ENCODE measurements at regions of chr6 and their contacts with region 1.

Region 1: DNA sequence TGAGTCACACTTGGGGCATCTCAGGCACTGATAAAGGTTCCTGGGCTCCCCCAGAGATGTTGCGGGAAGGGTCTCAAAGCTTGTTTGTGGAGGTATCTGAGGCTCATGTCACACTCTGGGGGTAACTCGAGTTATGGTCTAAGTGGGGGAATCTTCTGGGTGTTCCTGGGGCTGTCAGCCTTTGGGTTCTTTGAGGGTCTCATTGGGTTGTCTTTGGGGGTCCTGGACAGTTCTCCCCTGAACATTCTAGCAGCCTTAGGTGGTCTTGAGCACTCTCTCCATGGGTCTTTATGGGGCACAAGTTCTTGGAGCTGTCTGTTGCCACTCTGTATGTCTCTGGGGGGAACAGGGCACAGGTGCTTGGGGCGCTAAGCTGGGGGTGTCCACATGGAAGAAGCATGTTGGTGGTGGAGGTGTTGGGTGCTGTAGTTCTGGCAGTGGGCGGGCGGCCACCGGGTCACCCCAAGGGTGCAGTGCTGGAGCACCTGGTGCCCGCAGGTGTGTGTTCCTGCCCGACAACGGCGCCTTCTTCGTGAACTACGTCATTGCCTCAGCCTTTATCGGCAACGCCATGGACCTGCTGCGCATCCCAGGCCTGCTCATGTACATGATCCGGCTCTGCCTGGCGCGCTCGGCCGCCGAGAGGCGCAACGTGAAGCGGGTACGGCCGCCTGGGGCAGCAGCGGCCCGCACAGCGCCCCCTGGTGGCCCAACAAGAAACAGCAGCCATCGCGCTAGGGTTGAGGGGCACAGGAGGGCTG is 7.1 kb upstream of the CAPN11 start:
- DNase-seq: peak; percentile 50 to 95 (median 74)
- ATAC-seq: peak; percentile 88
- H3K4me3 ChIP-seq: no peak overlapping the region
- H3K27ac ChIP-seq: no peak overlapping the region
- H3K4me1 ChIP-seq: peaks cover 0 to 5% of the 10 kb centered on the region in 2 donors
- H3K27me3 ChIP-seq: no peaks in the 10 kb centered on the region
- CTCF ChIP-seq: peak; percentile 99

Region 2: DNA sequence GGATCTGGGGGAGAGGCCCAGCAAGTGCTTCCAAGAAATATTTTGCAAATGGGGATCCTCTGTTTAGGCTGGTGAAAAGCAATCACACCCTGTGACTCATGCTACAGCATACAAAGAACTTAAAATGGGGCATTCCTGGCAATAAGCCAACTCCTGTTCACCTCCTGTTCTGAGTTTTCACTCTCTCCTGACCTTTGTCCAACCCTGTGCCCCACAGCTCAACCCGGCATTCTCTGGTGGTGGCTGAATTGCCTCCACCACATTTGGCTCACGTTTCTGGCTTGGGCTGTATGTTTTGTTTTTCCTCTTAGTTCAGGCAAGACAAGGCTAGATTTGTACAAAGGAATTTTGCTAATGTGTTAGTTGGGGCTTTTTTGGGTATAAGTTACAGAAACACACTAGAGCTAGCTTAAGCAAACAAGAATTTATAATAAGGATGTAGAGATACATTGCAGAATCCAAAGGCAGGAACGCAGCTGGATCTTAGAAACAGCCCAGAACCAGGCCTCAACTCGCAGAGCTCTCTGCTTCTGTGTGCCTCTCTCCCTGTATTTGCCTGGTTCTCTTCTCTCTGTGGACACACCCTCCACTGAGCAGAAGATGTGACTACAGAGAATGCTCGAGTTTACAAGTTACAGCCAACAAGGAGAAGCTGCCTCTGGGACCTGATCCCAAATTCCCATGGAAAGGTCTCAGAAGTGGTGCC is 714.8 kb before region 1 on chr6:
- intact Hi-C with region 1: no loop called
- DNase-seq: peak in 2 of 4 donors; percentile 28 to 57
- ATAC-seq: peak; percentile 75
- H3K4me3 ChIP-seq: no peak overlapping the region
- H3K27ac ChIP-seq: peak overlapping the region in 1 of 2 donors; percentile 37
- H3K4me1 ChIP-seq: peaks cover 0 to 10% of the 10 kb centered on the region in 2 donors
- H3K27me3 ChIP-seq: no peaks in the 10 kb centered on the region
- CTCF ChIP-seq: no peak

Region 3: DNA sequence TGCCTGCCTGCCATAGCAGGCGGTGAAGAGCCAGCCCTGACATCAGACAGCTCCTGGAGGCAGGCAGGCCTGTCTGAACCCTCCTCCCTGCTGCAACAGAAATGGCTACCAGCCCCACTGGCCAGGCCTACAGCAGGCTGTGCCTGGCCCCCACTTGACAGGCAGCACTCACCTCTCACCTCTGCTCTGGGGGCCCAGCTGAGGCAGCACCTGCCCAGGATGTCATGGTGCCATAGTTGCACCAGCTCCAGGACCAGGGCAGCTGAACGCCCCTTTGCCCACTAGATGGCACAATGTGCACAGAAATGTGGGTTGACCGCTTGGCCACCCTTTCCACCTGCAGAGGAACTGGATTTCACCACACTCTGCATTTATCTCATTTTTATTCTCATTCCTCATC is 54.9 kb before region 1 on chr6:
- intact Hi-C with region 1: loop called (anchors 5 kb)
- DNase-seq: peak in 3 of 4 donors; percentile 79 to 87 (median 79)
- ATAC-seq: peak; percentile 85
- H3K4me3 ChIP-seq: no peak overlapping the region
- H3K27ac ChIP-seq: no peak overlapping the region
- H3K4me1 ChIP-seq: no peaks in the 10 kb centered on the region
- H3K27me3 ChIP-seq: no peaks in the 10 kb centered on the region
- CTCF ChIP-seq: peak; percentile 65 to 88